Calu3 (cell line): ENCODE measurements at regions of chr17 and their contacts with region 1.

Region 1: DNA sequence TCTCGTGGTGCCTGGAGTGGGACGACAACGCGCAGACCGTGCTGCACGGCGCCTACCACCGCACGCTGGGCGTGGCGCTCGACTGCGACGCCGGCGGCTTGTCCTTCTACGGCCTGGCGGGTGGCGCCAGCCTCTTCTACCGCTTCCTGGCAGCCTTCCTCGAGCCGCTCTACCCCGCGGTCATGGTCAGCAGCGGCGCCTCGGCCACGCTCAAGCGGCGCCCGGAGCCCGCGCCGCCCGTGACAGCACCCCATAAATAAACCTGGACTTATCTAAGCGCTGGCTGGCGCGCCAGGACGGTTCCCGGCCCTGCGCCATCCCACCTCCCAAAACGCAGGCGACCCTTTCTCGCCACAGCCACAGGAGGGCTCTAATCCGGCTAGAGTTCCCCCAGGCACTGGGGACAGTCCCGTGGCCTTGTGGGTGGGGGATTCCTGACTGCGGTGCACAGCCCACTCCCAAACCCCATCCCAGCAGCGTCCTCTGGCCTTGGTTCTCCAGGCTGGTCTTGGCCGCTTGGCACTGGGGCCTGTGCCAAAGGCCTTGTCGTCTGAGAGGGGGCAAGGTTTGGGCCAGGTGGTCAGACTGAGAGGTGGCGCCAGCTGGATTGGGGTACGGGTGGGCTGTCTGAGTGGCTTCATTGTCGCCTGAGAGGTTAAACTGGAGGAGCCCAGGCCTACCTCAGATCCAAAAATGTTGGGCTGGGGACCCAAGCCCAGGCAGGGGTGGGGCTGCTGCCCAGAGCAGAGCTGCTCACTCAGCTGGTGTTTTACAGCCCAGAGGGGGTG is 10.1 kb upstream of the SLC16A5 start:
- DNase-seq: peak; percentile 71
- H3K4me3 Mint-ChIP-seq: peak overlapping the region; percentile 66
- H3K27ac Mint-ChIP-seq: peak overlapping the region; percentile 84
- H3K4me1 Mint-ChIP-seq: peaks cover 23% of the 10 kb centered on the region
- H3K27me3 Mint-ChIP-seq: no peaks in the 10 kb centered on the region
- CTCF ChIP-seq: no peak

Region 2: DNA sequence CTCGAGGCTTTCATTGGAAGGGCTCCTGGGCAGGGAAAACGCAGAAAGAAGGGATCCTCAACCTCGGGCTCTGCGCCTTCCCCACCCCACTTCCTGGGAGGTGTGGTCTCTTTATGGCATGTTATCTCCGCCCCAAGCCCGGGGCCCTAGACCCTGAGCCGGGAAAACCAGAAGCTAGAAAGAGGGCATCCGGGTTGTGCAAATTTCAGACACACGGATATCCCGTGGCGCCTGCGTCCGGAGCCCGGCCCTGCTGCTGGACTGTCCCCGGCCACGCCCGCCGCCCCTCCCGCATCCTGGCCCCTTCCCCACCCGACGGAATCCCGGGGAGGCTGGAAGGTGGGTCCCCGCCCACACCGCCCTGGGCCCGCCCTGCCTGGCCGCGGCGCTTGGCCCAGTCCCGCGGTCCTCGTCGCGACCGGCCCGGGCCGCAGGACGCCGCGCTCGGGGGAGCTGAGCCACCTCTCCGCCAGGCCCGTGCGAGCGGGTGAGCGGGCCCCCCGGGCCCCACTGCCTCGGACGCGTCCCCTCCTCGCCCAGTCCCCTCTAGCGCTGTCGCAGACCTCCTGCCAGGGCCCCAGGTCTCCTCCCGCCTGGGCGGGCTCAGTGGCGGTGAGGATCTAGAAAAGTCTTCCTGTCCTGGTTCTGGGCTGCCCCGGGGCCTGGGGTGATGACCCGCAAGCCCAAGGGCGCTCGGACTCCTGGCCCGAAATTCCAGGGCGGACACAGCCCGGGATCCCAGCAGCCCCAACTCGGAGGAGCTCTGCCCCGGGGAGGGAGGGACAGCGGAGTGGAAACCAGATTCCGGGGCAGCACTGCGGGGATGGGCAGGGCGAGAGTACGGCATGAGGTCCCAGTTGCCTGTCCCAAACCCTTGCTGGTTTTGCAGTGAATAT is 10.1 kb after region 1 on chr17 and contains the start of gene SLC16A5:
- CTCF ChIA-PET with region 1: interaction called, 17 read pairs
- intact Hi-C with region 1: no loop called
- DNase-seq: peak; percentile 98
- H3K4me3 Mint-ChIP-seq: peak within 1 kb of the TSS; percentile 78
- H3K27ac Mint-ChIP-seq: peak within 1 kb of the TSS; percentile 90
- H3K4me1 Mint-ChIP-seq: peaks cover 65% of the 10 kb centered on the region
- H3K27me3 Mint-ChIP-seq: no peaks in the 10 kb centered on the region
- CTCF ChIP-seq: no peak
- total RNA-seq, gene SLC16A5: 124 and 187 TPM in 2 replicates

Region 3: DNA sequence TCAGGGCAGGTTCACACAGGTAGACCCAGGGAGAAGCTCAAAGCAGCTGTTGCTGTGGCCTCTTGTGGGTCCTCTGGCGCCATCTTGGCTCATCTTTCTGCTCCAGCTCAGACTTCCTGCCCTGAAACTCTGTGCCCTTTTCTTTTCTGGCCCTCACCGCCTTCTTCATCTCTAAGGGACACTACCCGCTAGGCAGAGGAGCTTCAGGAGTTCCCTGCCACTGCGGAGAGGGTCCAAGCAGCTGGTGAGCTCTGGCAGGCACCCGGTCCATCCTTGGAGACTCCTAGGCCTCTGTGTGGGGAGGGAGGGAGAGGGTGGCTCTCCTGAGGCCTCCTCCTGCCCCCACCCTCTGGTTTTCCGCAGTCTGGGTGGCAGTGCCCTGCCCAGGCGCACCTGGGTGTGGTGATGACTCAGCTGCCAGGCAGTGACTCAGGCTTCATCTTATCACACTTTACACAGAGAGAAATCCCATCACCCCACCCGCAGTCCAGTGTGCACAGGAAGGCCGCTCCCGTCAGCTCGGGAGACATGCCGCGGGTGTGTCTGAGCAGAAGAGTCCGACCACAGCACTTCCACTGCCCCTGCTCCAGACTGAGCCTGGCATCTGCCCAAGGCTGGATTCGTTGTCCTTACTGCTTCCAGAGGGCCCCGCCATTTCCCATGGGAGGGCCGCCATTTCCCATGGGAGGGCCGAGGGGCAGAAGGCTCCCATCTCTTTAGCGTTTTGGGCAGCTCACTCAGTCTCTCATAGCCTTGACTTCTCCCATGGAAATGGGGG is 46.5 kb after region 1 on chr17:
- CTCF ChIA-PET with region 1: no interaction called
- intact Hi-C with region 1: no loop called
- DNase-seq: peak; percentile 96
- H3K4me3 Mint-ChIP-seq: peak overlapping the region; percentile 53
- H3K27ac Mint-ChIP-seq: peak overlapping the region; percentile 93
- H3K4me1 Mint-ChIP-seq: peaks cover 34% of the 10 kb centered on the region
- H3K27me3 Mint-ChIP-seq: no peaks in the 10 kb centered on the region
- CTCF ChIP-seq: no peak

Region 4: DNA sequence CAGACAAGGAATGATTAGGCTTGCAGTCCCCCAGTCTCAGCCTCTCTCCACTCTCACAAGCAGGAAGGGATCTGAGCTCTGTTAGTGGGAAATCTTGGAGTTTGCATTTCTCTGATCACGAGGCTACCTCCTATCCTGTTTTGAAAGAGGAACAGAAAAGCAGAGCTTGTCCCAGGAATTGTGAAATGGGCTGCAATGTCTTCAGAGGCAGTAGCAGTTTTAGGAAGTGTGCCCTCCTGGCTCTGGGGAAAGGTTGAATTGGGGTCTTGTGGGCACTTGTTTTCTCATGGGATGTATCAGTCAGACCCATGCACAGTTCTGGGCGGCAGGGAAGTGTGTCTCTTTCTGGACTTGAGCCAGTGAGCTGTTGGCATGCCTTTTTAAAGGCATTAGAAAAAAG is 150.6 kb after region 1 on chr17:
- CTCF ChIA-PET with region 1: no interaction called
- intact Hi-C with region 1: no loop called
- DNase-seq: no peak
- H3K4me3 Mint-ChIP-seq: no peak overlapping the region
- H3K27ac Mint-ChIP-seq: no peak overlapping the region
- H3K4me1 Mint-ChIP-seq: no peaks in the 10 kb centered on the region
- H3K27me3 Mint-ChIP-seq: no peaks in the 10 kb centered on the region
- CTCF ChIP-seq: no peak

Region 5: GRCh38 chr17:75338335-75338734 is 260.6 kb after region 1 on chr17:
- CTCF ChIA-PET with region 1: no interaction called
- intact Hi-C with region 1: no loop called
- DNase-seq: no peak
- H3K4me3 Mint-ChIP-seq: no peak overlapping the region
- H3K27ac Mint-ChIP-seq: no peak overlapping the region
- H3K4me1 Mint-ChIP-seq: peaks cover 15% of the 10 kb centered on the region
- H3K27me3 Mint-ChIP-seq: no peaks in the 10 kb centered on the region
- CTCF ChIP-seq: no peak